Mammary epithelial cell (primary cell): ENCODE measurements at regions of chr13 and their contacts with region 1.

Region 1: GRCh38 chr13:25860845-25861244 is 191.0 kb downstream of the SHISA2 start:
- DNase-seq: peak; percentile 78
- H3K4me3 ChIP-seq: peak overlapping the region in 1 of 3 experiments; percentile 1
- H3K27ac ChIP-seq: peak overlapping the region; percentile 90
- H3K4me1 ChIP-seq: peaks cover 30% of the 10 kb centered on the region
- H3K27me3 ChIP-seq: no peaks in the 10 kb centered on the region
- CTCF ChIP-seq: no peak

Region 2: DNA sequence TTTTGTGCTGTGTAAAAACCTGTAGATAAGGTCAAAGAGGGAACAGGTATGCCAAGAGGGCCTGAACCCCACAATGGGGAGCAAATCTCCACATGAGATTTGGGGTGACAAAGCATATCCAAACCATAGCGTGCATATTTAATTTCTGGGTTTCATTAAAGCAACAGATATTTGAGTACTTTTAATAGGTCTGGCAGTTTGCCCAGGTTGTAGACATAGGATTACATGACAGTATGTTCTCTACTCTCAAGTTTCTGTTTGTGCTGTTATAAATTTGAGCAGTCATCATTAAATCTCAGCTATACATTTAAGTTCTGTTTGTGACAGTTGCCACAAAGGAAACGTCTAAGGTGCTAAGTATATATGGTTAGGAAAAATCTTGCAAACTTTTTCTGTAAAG is 252.7 kb before region 1 on chr13:
- CTCF ChIA-PET with region 1: no interaction called
- dilution Hi-C with region 1: no loop called
- in situ Hi-C with region 1: no loop called
- intact Hi-C with region 1: no loop called
- DNase-seq: no peak
- H3K4me3 ChIP-seq: no peak overlapping the region
- H3K27ac ChIP-seq: no peak overlapping the region
- H3K4me1 ChIP-seq: no peaks in the 10 kb centered on the region
- H3K27me3 ChIP-seq: no peaks in the 10 kb centered on the region
- CTCF ChIP-seq: no peak

Region 3: DNA sequence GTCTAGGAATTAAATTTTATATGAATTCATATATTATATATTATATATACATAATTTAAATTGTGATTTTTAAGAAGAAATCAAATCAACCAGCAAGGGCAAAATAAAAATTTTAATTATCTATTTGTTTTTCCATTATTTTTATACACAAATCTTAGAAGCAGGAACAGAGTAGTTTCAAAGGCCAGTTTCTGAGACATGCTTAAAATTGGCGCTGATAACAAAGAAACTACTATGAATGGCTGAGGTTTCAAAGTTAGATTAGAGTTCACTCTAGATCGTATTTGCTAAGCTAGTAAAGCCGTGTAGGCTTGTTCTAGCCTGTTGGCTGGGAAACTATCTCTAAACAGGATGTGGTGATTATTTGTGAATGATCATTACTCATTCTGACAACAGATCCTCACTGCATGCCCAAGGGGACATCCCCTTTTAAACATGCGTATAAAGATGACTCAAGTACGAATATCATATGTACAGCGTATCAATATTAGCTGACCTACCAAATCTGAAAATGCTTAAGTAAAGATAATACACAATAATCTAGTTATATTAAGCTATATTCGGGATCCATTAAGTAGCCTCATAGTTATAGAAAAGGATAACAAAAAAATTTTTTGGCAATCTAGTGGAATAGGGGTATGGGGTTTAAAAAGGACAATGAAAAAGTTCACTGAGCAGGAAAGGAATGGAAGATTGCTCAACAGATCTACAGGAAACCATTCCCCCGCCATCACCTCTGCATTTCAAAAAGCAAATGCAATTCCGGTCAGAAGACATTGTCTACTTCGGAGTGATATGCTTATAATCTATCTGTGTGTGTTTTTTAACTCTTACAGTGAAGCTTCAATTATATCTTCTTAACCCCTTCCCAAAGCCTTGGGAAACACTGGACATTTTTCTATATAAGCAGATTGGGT is 40.9 kb after region 1 on chr13:
- CTCF ChIA-PET with region 1: interaction called, 4 read pairs
- dilution Hi-C with region 1: loop called (anchors 5 kb)
- in situ Hi-C with region 1: no loop called
- intact Hi-C with region 1: loop called (anchors 5 kb)
- DNase-seq: peak; percentile 96
- H3K4me3 ChIP-seq: peak overlapping the region in 1 of 3 experiments; percentile 26
- H3K27ac ChIP-seq: peak overlapping the region; percentile 86
- H3K4me1 ChIP-seq: peaks cover 23% of the 10 kb centered on the region
- H3K27me3 ChIP-seq: no peaks in the 10 kb centered on the region
- CTCF ChIP-seq: no peak

Region 4: GRCh38 chr13:26048741-26049140 is 187.9 kb after region 1 on chr13:
- CTCF ChIA-PET with region 1: no interaction called
- dilution Hi-C with region 1: no loop called
- in situ Hi-C with region 1: no loop called
- intact Hi-C with region 1: no loop called
- DNase-seq: no peak
- H3K4me3 ChIP-seq: no peak overlapping the region
- H3K27ac ChIP-seq: no peak overlapping the region
- H3K4me1 ChIP-seq: peaks cover 21% of the 10 kb centered on the region
- H3K27me3 ChIP-seq: peaks cover 5% of the 10 kb centered on the region
- CTCF ChIP-seq: no peak

Region 5: GRCh38 chr13:26266311-26266710 is 405.5 kb after region 1 on chr13:
- CTCF ChIA-PET with region 1: no interaction called
- dilution Hi-C with region 1: no loop called
- in situ Hi-C with region 1: no loop called
- intact Hi-C with region 1: no loop called
- DNase-seq: no peak
- H3K4me3 ChIP-seq: no peak overlapping the region
- H3K27ac ChIP-seq: no peak overlapping the region
- H3K4me1 ChIP-seq: peaks cover 5% of the 10 kb centered on the region
- H3K27me3 ChIP-seq: no peaks in the 10 kb centered on the region
- CTCF ChIP-seq: no peak